CD8-positive, alpha-beta memory T cell (primary cell): ENCODE measurements at regions of chr1 and their contacts with region 1.

Region 1: GRCh38 chr1:192808518-192809306 is at the start of gene RGS2:
- DNase-seq: peak; percentile 83 to 93 (median 86)
- H3K4me3 ChIP-seq: peak within 1 kb of the TSS; percentile 99
- H3K4me3 Mint-ChIP-seq: peak within 1 kb of the TSS; percentile 92 to 99 (median 98)
- H3K27ac ChIP-seq: peak within 1 kb of the TSS; percentile 96
- H3K27ac Mint-ChIP-seq: peak within 1 kb of the TSS; percentile 96 to 99 (median 98)
- H3K4me1 ChIP-seq: peaks cover 23% of the 10 kb centered on the region
- H3K4me1 Mint-ChIP-seq: peaks cover 39 to 56% (median 44%) of the 10 kb centered on the region in 3 donors
- H3K27me3 ChIP-seq: no peaks in the 10 kb centered on the region
- H3K27me3 Mint-ChIP-seq: peaks cover 0 to 6% of the 10 kb centered on the region in 2 donors
- total RNA-seq, gene RGS2: 9.4 to 10.7 TPM

Region 2: DNA sequence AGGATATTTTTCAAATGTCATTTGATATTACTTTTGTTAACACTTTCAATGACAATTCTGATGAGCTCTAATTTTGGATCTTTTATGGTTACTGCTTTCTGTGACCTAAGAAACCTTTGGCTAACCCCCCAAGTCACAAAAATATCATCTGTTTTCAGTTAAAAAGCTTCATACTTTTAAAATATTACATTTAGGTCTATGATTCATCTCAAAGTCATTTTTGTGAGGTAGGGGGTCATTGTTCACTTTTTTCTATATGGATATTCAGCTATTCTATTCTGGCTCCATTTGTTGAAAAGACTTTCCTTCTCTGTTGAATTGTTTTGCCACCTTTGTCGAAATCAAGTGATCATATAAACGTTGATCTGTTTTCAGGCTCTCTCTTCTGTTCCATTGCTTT is 205.7 kb after region 1 on chr1:
- CTCF ChIA-PET with region 1: interaction called, 48 read pairs
- POLR2A ChIA-PET with region 1: interaction called, 12 read pairs
- DNase-seq: no peak
- H3K4me3 ChIP-seq: no peak overlapping the region
- H3K4me3 Mint-ChIP-seq: no peak overlapping the region
- H3K27ac ChIP-seq: no peak overlapping the region
- H3K27ac Mint-ChIP-seq: peak overlapping the region in 1 of 8 donors; percentile 11
- H3K4me1 ChIP-seq: no peaks in the 10 kb centered on the region
- H3K4me1 Mint-ChIP-seq: peaks cover 0 to 3% (median 0%) of the 10 kb centered on the region in 3 donors
- H3K27me3 ChIP-seq: no peaks in the 10 kb centered on the region
- H3K27me3 Mint-ChIP-seq: no peaks in the 10 kb centered on the region

Region 3: GRCh38 chr1:193019442-193020026 is 210.8 kb after region 1 on chr1:
- CTCF ChIA-PET with region 1: interaction called, 48 read pairs
- POLR2A ChIA-PET with region 1: interaction called, 12 read pairs
- DNase-seq: peak in 2 of 5 donors; percentile 24 to 34
- H3K4me3 ChIP-seq: no peak overlapping the region
- H3K4me3 Mint-ChIP-seq: no peak overlapping the region
- H3K27ac ChIP-seq: no peak overlapping the region
- H3K27ac Mint-ChIP-seq: peak overlapping the region in 1 of 8 donors; percentile 8
- H3K4me1 ChIP-seq: no peaks in the 10 kb centered on the region
- H3K4me1 Mint-ChIP-seq: peaks cover 0 to 5% (median 0%) of the 10 kb centered on the region in 3 donors
- H3K27me3 ChIP-seq: no peaks in the 10 kb centered on the region
- H3K27me3 Mint-ChIP-seq: no peaks in the 10 kb centered on the region

Region 4: DNA sequence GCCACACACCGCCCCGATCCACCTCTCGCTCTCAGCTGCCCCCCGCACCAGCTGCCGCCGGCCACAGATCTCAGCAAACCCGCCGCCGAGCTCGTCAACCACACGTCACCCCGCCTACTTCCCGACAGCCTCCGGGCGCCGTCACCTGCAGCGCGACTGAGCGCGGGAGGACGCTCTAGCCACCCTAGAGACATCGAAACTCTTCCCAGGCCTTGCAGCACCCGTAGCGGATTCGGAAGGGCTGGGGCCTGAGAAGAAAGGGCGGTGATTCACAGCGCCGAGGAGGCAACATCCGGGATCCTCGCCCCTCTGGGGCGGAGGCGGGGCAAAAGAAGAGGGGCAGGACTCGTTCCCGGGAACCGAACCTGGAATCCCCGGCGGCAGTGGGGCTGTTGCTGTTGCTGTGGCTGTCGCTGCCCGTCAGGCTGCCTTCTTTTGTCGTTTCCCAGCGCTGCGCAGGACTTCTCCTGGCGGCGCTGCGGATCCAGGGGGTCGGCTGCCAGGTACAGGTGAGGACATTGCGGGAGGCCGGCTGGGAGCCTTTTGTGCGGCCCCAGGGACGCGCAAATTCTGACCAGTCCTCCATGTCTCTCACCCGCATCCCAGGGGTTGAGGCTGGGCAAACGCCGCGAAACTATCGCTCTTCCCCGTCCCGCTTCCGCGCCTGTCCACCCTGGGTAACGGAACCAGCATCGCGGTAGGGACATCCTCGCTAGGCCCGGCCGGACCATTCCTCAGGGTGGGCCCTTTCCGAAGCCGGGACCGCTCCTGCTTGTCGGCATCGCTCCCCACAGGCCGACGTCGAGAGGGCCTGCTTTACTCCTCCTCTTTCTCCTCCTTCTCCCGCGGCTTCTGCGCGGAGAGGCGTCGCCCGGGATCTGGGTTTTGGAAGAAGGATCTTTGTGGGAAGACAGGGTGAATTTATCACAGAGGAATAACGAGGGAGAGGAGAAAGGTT is 250.8 kb after region 1 on chr1 and contains the starts of genes RO60 and UCHL5:
- CTCF ChIA-PET with region 1: interaction called, 26 read pairs
- POLR2A ChIA-PET with region 1: interaction called, 44 read pairs
- DNase-seq: peak; percentile 91 to 97 (median 94)
- H3K4me3 ChIP-seq: peak within 1 kb of the TSS; percentile 93
- H3K4me3 Mint-ChIP-seq: peak within 1 kb of the TSS; percentile 94 to 100 (median 94)
- H3K27ac ChIP-seq: peak within 1 kb of the TSS; percentile 97
- H3K27ac Mint-ChIP-seq: peak within 1 kb of the TSS; percentile 89 to 100 (median 98)
- H3K4me1 ChIP-seq: peaks cover 47% of the 10 kb centered on the region
- H3K4me1 Mint-ChIP-seq: peaks cover 61 to 76% (median 70%) of the 10 kb centered on the region in 3 donors
- H3K27me3 ChIP-seq: no peaks in the 10 kb centered on the region
- H3K27me3 Mint-ChIP-seq: no peaks in the 10 kb centered on the region
- total RNA-seq, gene RO60: 74.6 to 82.7 TPM
- total RNA-seq, gene UCHL5: 106 to 110 TPM

Region 5: DNA sequence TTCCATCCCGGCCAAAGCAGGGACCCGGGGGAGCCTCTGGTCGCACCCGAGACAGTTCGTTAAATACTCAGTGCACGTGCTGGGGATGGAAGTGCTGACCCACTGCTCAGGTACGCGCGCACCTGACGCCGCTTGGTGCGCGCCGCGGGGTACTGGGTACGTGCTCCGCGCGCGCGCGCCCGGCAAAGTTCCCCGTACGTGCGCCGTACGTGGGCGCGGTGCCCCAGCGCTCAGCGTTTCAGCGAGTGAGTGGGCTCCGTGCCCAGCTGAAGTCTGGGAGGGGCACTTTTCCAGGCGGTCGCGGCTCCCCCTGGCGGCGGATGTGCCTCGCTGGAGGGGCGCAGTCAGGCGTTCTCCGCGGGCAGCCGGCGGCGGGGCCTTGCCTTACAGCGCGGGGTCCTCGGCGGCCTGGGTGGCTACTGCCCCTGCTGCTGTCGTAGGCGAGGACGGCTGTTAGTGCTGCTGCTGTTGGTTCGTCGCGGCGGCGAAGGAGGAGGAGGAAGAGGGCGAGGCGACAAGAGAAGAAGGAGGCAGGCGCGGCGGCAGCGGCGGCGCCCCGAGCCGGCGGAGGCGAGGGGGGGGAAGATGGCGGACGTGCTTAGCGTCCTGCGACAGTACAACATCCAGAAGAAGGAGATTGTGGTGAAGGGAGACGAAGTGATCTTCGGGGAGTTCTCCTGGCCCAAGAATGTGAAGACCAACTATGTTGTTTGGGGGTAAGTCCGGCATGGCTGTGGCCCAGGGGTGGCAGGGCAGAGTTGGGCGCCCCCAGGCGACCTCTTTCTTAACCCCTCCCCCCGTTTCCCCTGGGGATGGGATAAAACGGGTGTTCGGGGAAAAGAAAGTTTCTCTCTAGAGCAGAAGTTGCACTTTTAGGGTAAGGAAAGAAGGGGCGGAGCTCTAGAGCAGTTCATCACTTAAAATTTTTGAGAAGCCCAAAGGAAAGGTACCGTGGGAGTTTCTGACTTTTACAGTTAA is 313.2 kb after region 1 on chr1 and contains the start of gene CDC73:
- CTCF ChIA-PET with region 1: interaction called, 21 read pairs
- POLR2A ChIA-PET with region 1: interaction called, 11 read pairs
- DNase-seq: peak; percentile 99 to 100 (median 99)
- H3K4me3 ChIP-seq: peak within 1 kb of the TSS; percentile 99
- H3K4me3 Mint-ChIP-seq: peak within 1 kb of the TSS; percentile 93 to 99 (median 95)
- H3K27ac ChIP-seq: peak within 1 kb of the TSS; percentile 97
- H3K27ac Mint-ChIP-seq: peak within 1 kb of the TSS; percentile 90 to 99 (median 97)
- H3K4me1 ChIP-seq: peaks cover 40% of the 10 kb centered on the region
- H3K4me1 Mint-ChIP-seq: peaks cover 52 to 64% (median 63%) of the 10 kb centered on the region in 3 donors
- H3K27me3 ChIP-seq: no peaks in the 10 kb centered on the region
- H3K27me3 Mint-ChIP-seq: peaks cover 0 to 1% of the 10 kb centered on the region in 2 donors
- total RNA-seq, gene CDC73: 59.8 to 63.8 TPM